Activated T-helper 2 cell treated with anti-CD3 and anti-CD28 coated beads, Interferon-gamma antibody, Interleukin-2, Interleukin-4, amounts not matched to agents 10 μg/mL and 5 μg/mL and 100 μg/mL, durations not matched to agents 14 hours and 24 hours and 36 hours (primary cell): ENCODE measurements at regions of chr4 and their contacts with region 1.

Region 1: DNA sequence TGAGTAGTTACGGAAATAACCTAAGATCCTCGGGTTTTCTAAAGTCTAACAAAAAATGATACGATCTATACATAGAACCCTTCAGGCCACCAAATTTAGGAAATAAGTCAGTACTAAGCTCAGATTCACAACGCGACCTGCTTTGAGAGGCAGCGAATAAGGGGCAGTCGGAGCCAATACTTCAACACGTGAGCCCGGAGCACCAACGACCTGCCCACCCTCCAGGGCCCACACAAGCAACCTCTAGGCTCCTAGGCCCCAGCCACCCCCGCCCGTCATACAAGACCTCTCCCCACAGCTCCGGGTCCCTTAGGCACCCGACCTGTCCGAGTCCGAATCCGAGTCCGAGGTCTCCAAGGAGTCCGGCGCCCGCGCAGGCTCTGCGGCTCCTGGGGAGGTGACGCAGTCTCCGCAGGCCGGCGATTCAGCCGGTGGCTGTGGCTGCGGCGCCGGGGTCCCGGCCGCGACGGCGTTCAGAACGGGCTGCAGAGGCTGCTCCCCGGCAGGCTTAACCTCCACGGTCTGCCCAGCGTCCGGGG is 580 bp downstream of the NAF1 start:
- DNase-seq: peak; percentile 56
- H3K4me3 Mint-ChIP-seq: peak overlapping the region; percentile 87
- H3K27ac Mint-ChIP-seq: peak overlapping the region; percentile 96
- H3K4me1 Mint-ChIP-seq: peaks cover 40% of the 10 kb centered on the region
- H3K27me3 Mint-ChIP-seq: peaks cover 2% of the 10 kb centered on the region

Region 2: GRCh38 chr4:162891788-162892707 is 274.1 kb before region 1 on chr4:
- intact Hi-C with region 1: loop called (anchors 5 kb)
- DNase-seq: no peak
- H3K4me3 Mint-ChIP-seq: no peak overlapping the region
- H3K27ac Mint-ChIP-seq: no peak overlapping the region
- H3K4me1 Mint-ChIP-seq: peaks cover 10% of the 10 kb centered on the region
- H3K27me3 Mint-ChIP-seq: peaks cover 15% of the 10 kb centered on the region

Region 3: DNA sequence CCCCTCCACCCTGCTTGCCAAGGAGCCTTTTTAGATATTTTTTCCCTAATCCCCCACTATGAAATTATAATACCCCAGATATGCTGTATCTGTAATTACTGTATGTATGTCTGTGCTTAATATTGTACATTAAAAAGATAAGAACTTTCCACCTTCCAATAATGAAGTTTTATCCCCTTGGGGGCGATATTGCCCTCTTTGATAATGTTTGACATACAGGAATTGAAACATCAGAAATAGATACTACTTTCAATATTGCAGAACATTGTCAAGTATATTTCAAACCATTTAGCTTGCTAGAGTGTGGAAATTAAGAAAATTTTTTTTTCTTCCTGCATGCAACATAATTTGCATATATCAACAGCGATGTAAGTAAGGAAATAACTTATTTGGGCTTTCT is 58.4 kb before region 1 on chr4:
- intact Hi-C with region 1: loop called (anchors 2 kb)
- DNase-seq: no peak
- H3K4me3 Mint-ChIP-seq: no peak overlapping the region
- H3K27ac Mint-ChIP-seq: no peak overlapping the region
- H3K4me1 Mint-ChIP-seq: peaks cover 24% of the 10 kb centered on the region
- H3K27me3 Mint-ChIP-seq: no peaks in the 10 kb centered on the region

Region 4: DNA sequence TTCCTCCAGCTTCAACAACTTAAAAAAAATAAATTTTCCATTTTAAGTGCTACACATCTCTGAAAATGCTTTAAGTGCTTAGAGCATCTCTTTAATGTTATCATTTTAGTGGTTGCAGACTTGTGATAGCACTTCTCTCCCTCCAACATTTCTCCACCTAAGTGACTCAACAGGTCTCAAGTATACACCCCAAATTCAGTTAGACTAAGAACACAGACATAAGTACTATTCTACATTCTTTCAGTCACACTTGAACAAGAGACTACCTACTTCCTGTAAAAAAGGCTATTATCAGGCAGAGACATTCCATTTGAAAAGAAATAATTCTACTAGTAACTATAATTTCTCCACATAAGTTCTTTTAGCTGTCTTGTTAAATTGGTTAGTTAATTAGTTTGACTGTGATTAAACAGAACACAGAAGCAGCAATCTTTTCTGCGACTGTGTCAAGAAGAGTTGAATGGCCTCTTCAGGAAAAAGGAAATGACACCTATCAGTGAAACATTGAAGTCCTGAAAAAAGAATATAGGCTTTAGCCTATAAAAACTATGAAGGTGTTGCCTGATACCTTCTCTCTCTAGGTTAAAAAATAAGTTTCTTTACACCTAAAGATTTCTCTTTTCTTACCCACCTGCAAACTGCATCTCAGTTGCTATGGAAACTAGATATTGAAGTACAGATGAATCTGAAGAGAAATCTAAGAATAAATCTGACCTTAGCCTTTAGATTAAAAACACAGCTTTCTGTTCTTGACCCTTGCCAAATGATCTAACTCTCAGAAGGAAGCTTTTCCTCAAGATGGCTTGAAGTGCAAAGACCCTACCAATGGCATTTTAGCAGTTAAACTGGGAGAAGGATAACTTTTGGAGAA is 17.4 kb before region 1 on chr4:
- intact Hi-C with region 1: loop called (anchors 2 kb)
- DNase-seq: no peak
- H3K4me3 Mint-ChIP-seq: no peak overlapping the region
- H3K27ac Mint-ChIP-seq: no peak overlapping the region
- H3K4me1 Mint-ChIP-seq: peaks cover 12% of the 10 kb centered on the region
- H3K27me3 Mint-ChIP-seq: no peaks in the 10 kb centered on the region

Region 5: GRCh38 chr4:163233321-163233720 is 67.2 kb after region 1 on chr4:
- intact Hi-C with region 1: no loop called
- DNase-seq: no peak
- H3K4me3 Mint-ChIP-seq: no peak overlapping the region
- H3K27ac Mint-ChIP-seq: no peak overlapping the region
- H3K4me1 Mint-ChIP-seq: no peaks in the 10 kb centered on the region
- H3K27me3 Mint-ChIP-seq: no peaks in the 10 kb centered on the region

Region 6: GRCh38 chr4:163494360-163495162 is 328.5 kb after region 1 on chr4 and contains the start of gene TMA16:
- intact Hi-C with region 1: loop called (anchors 1 kb)
- DNase-seq: peak; percentile 86
- H3K4me3 Mint-ChIP-seq: peak within 1 kb of the TSS; percentile 95
- H3K27ac Mint-ChIP-seq: peak within 1 kb of the TSS; percentile 97
- H3K4me1 Mint-ChIP-seq: peaks cover 19% of the 10 kb centered on the region
- H3K27me3 Mint-ChIP-seq: peaks cover 12% of the 10 kb centered on the region
- total RNA-seq, gene TMA16: 75.5 and 81.3 TPM in 2 replicates